ENCODE measurements at regions of chr18 and their contacts with region 1.

Region 1: DNA sequence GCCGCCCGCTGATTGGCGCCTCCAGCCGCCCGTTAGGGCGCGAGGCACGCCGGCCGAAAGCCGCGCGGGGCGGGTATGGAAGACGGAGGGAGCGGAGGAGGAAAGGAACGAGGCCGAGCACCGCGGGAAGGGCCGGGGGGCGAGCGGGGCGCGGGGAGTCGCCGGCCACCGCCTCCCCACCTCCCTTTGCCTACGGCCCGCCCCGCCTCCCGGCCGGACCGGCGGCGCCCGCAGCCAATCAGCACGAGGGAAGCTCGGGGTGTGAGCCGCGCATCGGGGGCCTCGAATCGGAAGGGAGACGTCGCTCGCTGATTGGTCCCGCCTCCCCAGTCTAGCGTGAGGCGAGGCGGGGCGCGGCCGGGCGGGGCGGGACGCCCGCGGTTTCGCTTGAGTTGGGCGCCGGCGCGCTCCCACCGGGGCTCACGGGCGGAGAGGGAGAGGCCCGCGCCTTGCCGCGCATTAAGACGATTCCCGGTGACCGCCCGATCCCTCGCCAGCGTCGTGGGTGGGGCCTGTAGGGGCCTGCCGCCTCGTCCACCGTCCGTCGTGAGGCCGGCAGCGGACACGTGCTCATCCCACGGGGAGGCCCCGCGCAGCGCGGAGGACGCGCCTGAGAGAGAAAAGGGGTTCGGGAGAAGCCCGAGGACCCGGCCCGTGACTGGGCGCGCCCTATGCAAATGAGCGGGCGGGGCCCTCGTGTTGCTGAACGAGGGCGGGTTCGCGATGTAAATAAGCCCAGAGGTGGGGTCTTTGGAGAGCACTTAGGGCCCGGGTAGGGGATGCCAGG is 665 bp upstream of the SMAD2 start:
- DNase-seq: peak; percentile 96
- H3K4me3 Mint-ChIP-seq: peak overlapping the region; percentile 80
- H3K27ac Mint-ChIP-seq: peak overlapping the region; percentile 87
- H3K4me1 Mint-ChIP-seq: peaks cover 34% of the 10 kb centered on the region
- H3K27me3 Mint-ChIP-seq: no peaks in the 10 kb centered on the region

Region 2: GRCh38 chr18:47772374-47773248 is 158.5 kb before region 1 on chr18:
- CTCF ChIA-PET with region 1: no interaction called
- intact Hi-C with region 1: loop called (anchors 2 kb)
- DNase-seq: peak; percentile 75
- H3K4me3 Mint-ChIP-seq: no peak overlapping the region
- H3K27ac Mint-ChIP-seq: no peak overlapping the region
- H3K4me1 Mint-ChIP-seq: no peaks in the 10 kb centered on the region
- H3K27me3 Mint-ChIP-seq: peaks cover 4% of the 10 kb centered on the region

Region 3: GRCh38 chr18:47883771-47884413 is 47.2 kb before region 1 on chr18:
- CTCF ChIA-PET with region 1: no interaction called
- intact Hi-C with region 1: loop called (anchors 2 kb)
- DNase-seq: peak; percentile 73
- H3K4me3 Mint-ChIP-seq: no peak overlapping the region
- H3K27ac Mint-ChIP-seq: peak overlapping the region; percentile 27
- H3K4me1 Mint-ChIP-seq: peaks cover 28% of the 10 kb centered on the region
- H3K27me3 Mint-ChIP-seq: no peaks in the 10 kb centered on the region

Region 4: DNA sequence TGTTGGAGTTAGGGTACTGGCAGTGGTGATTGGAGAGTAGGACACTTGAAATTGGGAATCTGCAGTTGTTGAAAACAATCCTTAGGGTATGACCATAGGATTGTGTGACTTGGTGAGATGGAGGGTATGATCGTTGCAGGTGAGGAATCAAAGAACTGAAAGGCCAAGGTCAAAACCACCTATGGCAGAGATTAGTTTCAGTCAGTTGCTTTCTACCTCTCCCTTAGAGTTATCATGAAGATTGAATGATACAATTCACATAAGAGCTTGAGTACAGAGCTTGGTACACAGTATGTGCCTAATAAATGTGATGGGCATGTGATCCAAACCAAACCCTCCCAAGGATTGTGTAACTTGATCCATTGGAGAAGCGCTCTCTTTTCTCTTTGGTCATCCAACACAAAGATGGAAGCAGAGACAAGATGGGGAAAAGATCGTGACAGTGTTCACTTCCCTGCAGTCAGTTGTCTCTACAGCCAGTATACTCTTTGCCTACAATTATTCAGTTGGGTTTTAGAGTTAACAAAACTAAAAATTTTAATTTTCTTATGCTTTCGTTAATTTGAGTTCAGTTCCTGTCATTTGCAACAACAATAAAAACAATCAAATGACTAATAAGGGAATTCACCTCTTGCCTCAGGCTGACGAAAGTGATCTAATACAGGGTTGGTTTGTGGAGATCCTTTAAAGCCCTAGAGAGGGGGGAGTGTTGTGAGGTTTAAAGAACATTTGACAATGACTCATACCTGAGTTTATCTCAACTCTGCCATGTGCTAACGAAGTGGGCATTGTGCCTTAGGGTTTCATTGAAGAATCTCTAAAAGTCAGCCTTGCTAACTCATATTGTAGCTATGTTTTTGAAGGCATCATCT is 14.1 kb after region 1 on chr18:
- CTCF ChIA-PET with region 1: no interaction called
- intact Hi-C with region 1: loop called (anchors 1 kb)
- DNase-seq: no peak
- H3K4me3 Mint-ChIP-seq: no peak overlapping the region
- H3K27ac Mint-ChIP-seq: no peak overlapping the region
- H3K4me1 Mint-ChIP-seq: peaks cover 7% of the 10 kb centered on the region
- H3K27me3 Mint-ChIP-seq: no peaks in the 10 kb centered on the region

Region 5: DNA sequence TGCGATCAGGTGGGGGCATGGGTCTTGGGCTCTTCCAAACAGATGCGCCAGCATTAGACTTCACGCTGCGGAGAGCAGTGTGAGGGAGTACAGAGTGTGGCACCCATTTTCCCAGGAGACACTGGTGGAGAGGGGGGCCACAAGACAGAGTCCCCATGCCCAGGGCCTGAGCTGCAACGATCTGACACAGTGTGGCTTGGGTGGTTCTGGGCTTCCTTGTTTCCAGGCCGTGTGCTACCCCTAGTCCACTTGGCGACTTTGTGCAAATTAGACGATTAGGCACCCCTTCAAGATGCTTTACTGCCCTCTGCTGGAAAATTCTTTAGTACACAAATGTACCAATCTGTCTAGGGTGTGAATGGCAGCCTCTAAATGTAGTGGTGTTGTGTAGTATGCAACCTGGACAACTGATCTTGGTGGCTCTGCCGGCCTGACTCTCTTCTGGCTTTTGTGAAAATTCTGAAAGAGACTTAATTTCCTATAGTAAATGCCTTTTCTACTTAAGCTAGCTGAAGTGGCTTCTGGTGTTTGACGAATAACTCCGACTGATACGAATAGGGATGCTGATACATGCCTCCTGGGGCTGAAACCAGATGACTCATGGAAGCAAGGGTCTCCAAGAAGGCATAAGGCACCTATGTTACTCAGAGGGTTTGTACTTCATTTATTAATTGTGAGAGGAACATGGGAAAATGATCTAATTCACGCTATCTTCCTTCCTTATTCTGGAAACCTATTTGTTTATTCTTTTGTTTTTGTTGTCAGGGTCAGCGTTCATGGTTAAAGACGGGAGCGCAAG is 91.6 kb after region 1 on chr18:
- CTCF ChIA-PET with region 1: no interaction called
- intact Hi-C with region 1: loop called (anchors 5 kb)
- DNase-seq: no peak
- H3K4me3 Mint-ChIP-seq: no peak overlapping the region
- H3K27ac Mint-ChIP-seq: no peak overlapping the region
- H3K4me1 Mint-ChIP-seq: no peaks in the 10 kb centered on the region
- H3K27me3 Mint-ChIP-seq: peaks cover 11% of the 10 kb centered on the region

Region 6: DNA sequence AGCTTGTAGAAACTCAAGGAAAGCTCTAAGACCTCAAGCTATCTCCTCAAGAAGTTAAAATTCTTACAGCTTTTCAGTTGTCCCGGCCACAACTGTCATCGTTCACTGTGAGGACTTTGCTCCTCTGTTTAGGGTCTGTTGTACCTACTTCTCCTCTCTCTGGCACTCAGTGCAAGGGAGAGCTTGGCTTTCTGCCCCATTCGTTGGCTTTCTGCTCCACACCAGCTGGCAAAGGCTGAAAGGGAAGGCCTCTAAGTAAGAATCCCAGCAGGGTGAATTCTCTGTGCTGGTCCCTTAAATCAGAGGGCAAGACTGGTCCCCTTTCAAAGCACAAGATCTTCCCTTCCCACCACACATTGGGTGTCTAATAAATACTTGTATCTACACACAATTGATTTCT is 460.7 kb after region 1 on chr18:
- CTCF ChIA-PET with region 1: no interaction called
- intact Hi-C with region 1: no loop called
- DNase-seq: no peak
- H3K4me3 Mint-ChIP-seq: no peak overlapping the region
- H3K27ac Mint-ChIP-seq: no peak overlapping the region
- H3K4me1 Mint-ChIP-seq: no peaks in the 10 kb centered on the region
- H3K27me3 Mint-ChIP-seq: peaks cover 44% of the 10 kb centered on the region

Region 7: GRCh38 chr18:49486953-49487710 is 1556.0 kb after region 1 on chr18 and contains the start of gene C18orf32:
- CTCF ChIA-PET with region 1: no interaction called
- intact Hi-C with region 1: loop called (anchors 5 kb)
- DNase-seq: peak; percentile 94
- H3K4me3 Mint-ChIP-seq: peak within 1 kb of the TSS; percentile 94
- H3K27ac Mint-ChIP-seq: peak within 1 kb of the TSS; percentile 94
- H3K4me1 Mint-ChIP-seq: peaks cover 63% of the 10 kb centered on the region
- H3K27me3 Mint-ChIP-seq: no peaks in the 10 kb centered on the region
- total RNA-seq, gene C18orf32: 24.1 to 26.6 TPM

Measured in activated naive CD4-positive, alpha-beta T cell treated with anti-CD3 and anti-CD28 coated beads for 36 hours (primary cell).